ENCODE measurements at regions of chr7 and their contacts with region 1.

Region 1: GRCh38 chr7:20330240-20330927 is at the start of gene ITGB8:
- DNase-seq: no peak
- ATAC-seq: peak; percentile 70
- H3K4me3 ChIP-seq: peak within 1 kb of the TSS; percentile 83
- H3K27ac ChIP-seq: peak within 1 kb of the TSS; percentile 87
- H3K4me1 ChIP-seq: peaks cover 19% of the 10 kb centered on the region
- H3K27me3 ChIP-seq: no peaks in the 10 kb centered on the region; a peak in 1 of 4 replicates
- CTCF ChIP-seq: 0 out of 6 replicates have a peak, but pooled peaks of 1 of the 3 experiments have one; percentile 12
- EP300 ChIP-seq: no peak
- POLR2A ChIP-seq: no peak; the same call in none of the 2 replicates
- RAD21 ChIP-seq: 0 out of 2 replicates have a peak, but pooled peaks have one; percentile 13
- polyA plus RNA-seq, gene ITGB8: 0.37 to 0.40 TPM

Region 2: GRCh38 chr7:19708397-19709248 is 621.8 kb before region 1 on chr7 and contains the start of gene POLR1F:
- CTCF ChIA-PET with region 1: interaction called, 5 read pairs
- POLR2A ChIA-PET with region 1: no interaction called
- RAD21 ChIA-PET with region 1: interaction called, 15 read pairs
- SMC1A ChIA-PET with region 1: interaction called, 4 read pairs
- in situ Hi-C with region 1: no loop called
- intact Hi-C with region 1: loop called (anchors 5 kb)
- DNase-seq: peak; percentile 90
- ATAC-seq: peak; percentile 95
- H3K4me3 ChIP-seq: peak within 1 kb of the TSS; percentile 90
- H3K27ac ChIP-seq: peak within 1 kb of the TSS; percentile 62
- H3K4me1 ChIP-seq: 0 out of 2 replicates have a peak, but pooled peaks cover 3% of the 10 kb centered on the region
- H3K27me3 ChIP-seq: no peaks in the 10 kb centered on the region
- CTCF ChIP-seq: peak; percentile 92 to 98 (median 97); a peak in 5 of 6 replicates
- EP300 ChIP-seq: 0 out of 4 replicates have a peak, but pooled peaks of 1 of the 2 experiments have one; percentile 33
- POLR2A ChIP-seq: peak; percentile 99
- RAD21 ChIP-seq: peak; percentile 59
- polyA plus RNA-seq, gene POLR1F: 95.3 to 129 TPM

Region 3: DNA sequence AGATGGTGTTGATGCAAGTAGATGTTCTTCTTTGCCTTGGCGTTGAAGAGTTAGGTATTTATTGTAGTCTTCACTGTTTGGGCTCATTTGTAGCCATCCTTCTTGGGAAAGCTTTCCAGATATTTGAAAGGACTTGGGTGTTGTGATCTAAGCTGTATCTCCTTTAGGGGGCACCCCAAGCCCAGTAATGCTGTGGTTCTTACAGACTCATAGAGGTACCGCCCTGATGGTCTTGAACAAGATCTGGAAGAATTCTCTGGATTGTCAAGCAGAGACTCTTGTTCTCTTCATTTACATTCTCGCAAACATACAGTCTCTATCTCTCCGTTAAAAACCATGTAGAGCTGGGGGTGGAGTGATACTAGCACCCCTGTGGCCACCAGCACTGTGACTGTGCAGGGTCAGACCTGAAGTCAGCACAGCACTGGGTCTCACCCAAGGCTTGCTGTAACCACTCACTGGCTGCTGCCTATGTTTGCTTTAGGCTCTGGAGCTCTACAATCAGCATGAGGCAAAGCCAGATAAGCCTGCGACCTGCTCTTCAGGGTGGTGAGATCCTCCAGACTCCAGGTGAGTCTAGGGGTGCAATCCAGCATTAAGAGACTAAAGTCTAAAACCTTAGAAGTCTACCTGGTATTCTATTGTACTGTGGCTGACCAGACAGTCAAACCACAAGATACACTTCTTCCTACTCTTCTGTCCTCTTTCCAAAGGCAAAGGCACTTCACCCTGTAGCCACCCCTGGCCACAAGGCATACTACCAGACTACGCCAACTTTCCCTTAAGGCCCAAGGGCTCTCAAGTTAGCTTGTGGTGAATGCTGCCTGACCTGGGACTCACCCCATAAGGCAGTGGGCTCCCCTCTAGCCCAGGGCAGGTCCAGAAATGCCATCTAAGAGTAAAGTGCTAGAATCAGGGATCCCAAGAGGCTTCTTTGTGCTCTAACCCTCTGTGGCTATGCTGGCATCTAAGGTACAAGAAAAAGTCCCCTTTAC is 347.2 kb before region 1 on chr7:
- CTCF ChIA-PET with region 1: interaction called, 14 read pairs
- POLR2A ChIA-PET with region 1: no interaction called
- RAD21 ChIA-PET with region 1: interaction called, 3 read pairs
- SMC1A ChIA-PET with region 1: interaction called, 5 read pairs
- in situ Hi-C with region 1: no loop called
- intact Hi-C with region 1: loop called (anchors 5 kb)
- DNase-seq: peak; percentile 38
- ATAC-seq: peak; percentile 86
- H3K4me3 ChIP-seq: no peak overlapping the region
- H3K27ac ChIP-seq: no peak overlapping the region
- H3K4me1 ChIP-seq: no peaks in the 10 kb centered on the region; the same call in 1 of the 2 replicates
- H3K27me3 ChIP-seq: no peaks in the 10 kb centered on the region
- CTCF ChIP-seq: peak; percentile 43 to 55 (median 46); a peak in 5 of 6 replicates
- EP300 ChIP-seq: no peak
- POLR2A ChIP-seq: no peak
- RAD21 ChIP-seq: peak; percentile 89

Region 4: GRCh38 chr7:20238754-20239324 is 91.5 kb before region 1 on chr7:
- CTCF ChIA-PET with region 1: interaction called, 7 read pairs
- POLR2A ChIA-PET with region 1: interaction called, 15 read pairs
- RAD21 ChIA-PET with region 1: interaction called, 18 read pairs
- SMC1A ChIA-PET with region 1: interaction called, 13 read pairs
- in situ Hi-C with region 1: no loop called
- intact Hi-C with region 1: loop called (anchors 1 kb)
- DNase-seq: peak; percentile 98
- ATAC-seq: peak; percentile 72
- H3K4me3 ChIP-seq: peak overlapping the region; percentile 35; the same call in 1 of the 2 replicates
- H3K27ac ChIP-seq: peak overlapping the region; percentile 76
- H3K4me1 ChIP-seq: peaks cover 49% of the 10 kb centered on the region
- H3K27me3 ChIP-seq: no peaks in the 10 kb centered on the region
- CTCF ChIP-seq: no peak
- EP300 ChIP-seq: peak; percentile 99 to 100
- POLR2A ChIP-seq: peak; percentile 29; the same call in 1 of the 2 replicates
- RAD21 ChIP-seq: no peak

Region 5: GRCh38 chr7:20299647-20300312 is 30.6 kb before region 1 on chr7:
- CTCF ChIA-PET with region 1: interaction called, 4 read pairs
- POLR2A ChIA-PET with region 1: interaction called, 14 read pairs
- RAD21 ChIA-PET with region 1: interaction called, 4 read pairs
- SMC1A ChIA-PET with region 1: interaction called, 14 read pairs
- in situ Hi-C with region 1: no loop called
- intact Hi-C with region 1: loop called (anchors 1 kb)
- DNase-seq: peak; percentile 83
- ATAC-seq: peak; percentile 70
- H3K4me3 ChIP-seq: no peak overlapping the region
- H3K27ac ChIP-seq: peak overlapping the region; percentile 76
- H3K4me1 ChIP-seq: peaks cover 16% of the 10 kb centered on the region
- H3K27me3 ChIP-seq: no peaks in the 10 kb centered on the region
- CTCF ChIP-seq: no peak
- EP300 ChIP-seq: no peak
- POLR2A ChIP-seq: no peak
- RAD21 ChIP-seq: no peak

Region 6: GRCh38 chr7:20440472-20441105 is 110.2 kb after region 1 on chr7:
- CTCF ChIA-PET with region 1: interaction called, 17 read pairs
- POLR2A ChIA-PET with region 1: no interaction called
- RAD21 ChIA-PET with region 1: interaction called, 9 read pairs
- SMC1A ChIA-PET with region 1: interaction called, 10 read pairs
- in situ Hi-C with region 1: no loop called
- intact Hi-C with region 1: loop called (anchors 5 kb)
- DNase-seq: no peak
- ATAC-seq: peak; percentile 35; the same call in 1 of the 3 replicates
- H3K4me3 ChIP-seq: no peak overlapping the region
- H3K27ac ChIP-seq: no peak overlapping the region
- H3K4me1 ChIP-seq: peaks cover 15% of the 10 kb centered on the region; the same call in 1 of the 2 replicates
- H3K27me3 ChIP-seq: no peaks in the 10 kb centered on the region
- CTCF ChIP-seq: peak; percentile 34 to 65 (median 58)
- EP300 ChIP-seq: no peak
- POLR2A ChIP-seq: no peak
- RAD21 ChIP-seq: peak; percentile 60

Measured in GM12878 (cell line).